ENCODE measurements at regions of chr16 and their contacts with region 1.

Region 1: DNA sequence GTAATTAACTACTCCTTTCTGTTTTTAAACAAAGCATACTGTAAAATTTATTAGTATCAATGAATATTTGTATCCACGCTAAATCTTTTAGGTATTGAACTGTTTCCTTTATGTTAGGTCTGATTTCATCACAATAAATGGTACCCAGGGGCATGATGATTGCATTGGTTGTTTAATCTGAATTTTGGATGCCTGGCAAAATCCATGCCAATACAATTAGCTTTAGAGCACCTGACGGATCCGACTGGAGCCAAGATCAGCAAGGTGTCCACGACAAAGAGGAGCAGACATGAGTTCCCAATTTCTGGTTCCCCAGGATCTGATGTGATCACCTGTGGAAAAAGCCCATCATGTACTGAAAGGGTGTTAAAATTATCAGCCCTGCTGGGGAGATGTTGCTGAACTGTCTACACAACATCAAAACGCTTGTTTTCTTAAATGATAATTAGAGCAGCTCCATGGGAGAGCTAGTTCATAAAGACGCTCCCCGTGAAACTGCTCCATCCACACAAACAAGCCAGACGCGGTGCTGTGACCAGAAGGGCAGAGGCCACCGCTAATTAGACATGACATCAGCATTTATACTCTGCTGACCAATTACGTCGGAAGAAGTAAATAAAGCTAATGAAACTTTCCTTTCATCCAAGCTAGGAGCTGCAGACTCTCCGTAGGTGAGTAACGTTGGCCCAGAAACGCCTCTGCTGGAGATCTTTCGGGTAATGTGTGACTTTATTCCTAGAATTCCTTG is 151.7 kb downstream of the CPPED1 start:
- DNase-seq: no peak
- ATAC-seq: no peak
- H3K4me3 ChIP-seq: no peak overlapping the region
- H3K27ac ChIP-seq: no peak overlapping the region
- H3K4me1 ChIP-seq: no peaks in the 10 kb centered on the region
- H3K27me3 ChIP-seq: peaks cover 0 to 2% (median 0%) of the 10 kb centered on the region in 3 donors
- CTCF ChIP-seq: no peak

Region 2: DNA sequence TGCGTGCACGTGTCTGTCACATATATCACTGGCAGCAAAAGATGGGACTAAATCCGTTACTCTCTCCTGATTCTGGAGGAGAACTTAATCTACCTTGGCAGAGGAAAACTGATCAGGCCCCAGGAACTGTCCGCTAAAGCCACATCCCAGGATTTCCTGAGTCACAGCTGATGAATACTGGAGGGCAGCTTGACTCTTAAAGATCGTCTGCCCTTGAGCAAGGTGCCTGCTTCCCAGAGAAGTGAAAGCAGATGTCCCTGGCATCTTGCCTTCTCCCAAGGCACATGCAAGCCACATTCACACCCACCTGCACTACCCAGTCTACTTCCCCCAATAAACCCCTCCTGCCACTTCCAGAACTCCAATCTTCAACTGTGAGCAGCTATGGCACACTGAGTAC is 52.0 kb after region 1 on chr16:
- intact Hi-C with region 1: loop called in 1 of 2 experiments (anchors 5 kb)
- DNase-seq: no peak
- ATAC-seq: no peak
- H3K4me3 ChIP-seq: no peak overlapping the region
- H3K27ac ChIP-seq: no peak overlapping the region
- H3K4me1 ChIP-seq: no peaks in the 10 kb centered on the region
- H3K27me3 ChIP-seq: no peaks in the 10 kb centered on the region
- CTCF ChIP-seq: no peak